ENCODE measurements at regions of chr2 and their contacts with region 1.

Region 1: GRCh38 chr2:60948926-60949579 is 67.7 kb downstream of the REL start:
- DNase-seq: peak; percentile 80
- H3K4me3 Mint-ChIP-seq: no peak overlapping the region
- H3K27ac Mint-ChIP-seq: peak overlapping the region; percentile 89
- H3K4me1 Mint-ChIP-seq: peaks cover 35% of the 10 kb centered on the region
- H3K27me3 Mint-ChIP-seq: no peaks in the 10 kb centered on the region
- CTCF ChIP-seq: no peak

Region 2: GRCh38 chr2:60614319-60614718 is 334.7 kb before region 1 on chr2:
- CTCF ChIA-PET with region 1: no interaction called
- POLR2A ChIA-PET with region 1: no interaction called
- intact Hi-C with region 1: no loop called
- DNase-seq: no peak
- H3K4me3 Mint-ChIP-seq: no peak overlapping the region
- H3K27ac Mint-ChIP-seq: no peak overlapping the region
- H3K4me1 Mint-ChIP-seq: no peaks in the 10 kb centered on the region
- H3K27me3 Mint-ChIP-seq: no peaks in the 10 kb centered on the region
- CTCF ChIP-seq: no peak

Region 3: DNA sequence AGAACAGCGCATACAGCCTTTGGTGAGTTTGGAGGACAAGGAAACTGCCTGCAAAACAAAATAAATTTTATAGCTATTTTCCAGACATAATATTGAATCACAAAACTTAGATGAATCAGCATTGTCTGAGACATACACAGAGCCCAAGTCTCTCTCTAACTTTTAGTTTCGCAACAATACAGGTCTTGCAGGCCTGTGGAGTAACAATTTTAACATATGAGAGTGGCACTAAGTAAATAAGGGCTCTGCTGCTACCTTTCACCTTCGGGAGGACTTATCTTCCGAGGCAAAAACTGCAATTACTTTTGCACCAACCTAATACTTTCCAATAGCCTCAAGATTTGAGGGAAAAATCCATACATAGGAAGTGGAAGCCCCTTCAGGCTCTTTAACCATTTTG is 12.4 kb after region 1 on chr2:
- CTCF ChIA-PET with region 1: interaction called, 3 read pairs
- POLR2A ChIA-PET with region 1: interaction called, 118 read pairs
- intact Hi-C with region 1: no loop called
- DNase-seq: peak; percentile 84
- H3K4me3 Mint-ChIP-seq: no peak overlapping the region
- H3K27ac Mint-ChIP-seq: peak overlapping the region; percentile 71
- H3K4me1 Mint-ChIP-seq: peaks cover 21% of the 10 kb centered on the region
- H3K27me3 Mint-ChIP-seq: no peaks in the 10 kb centered on the region
- CTCF ChIP-seq: no peak

Region 4: DNA sequence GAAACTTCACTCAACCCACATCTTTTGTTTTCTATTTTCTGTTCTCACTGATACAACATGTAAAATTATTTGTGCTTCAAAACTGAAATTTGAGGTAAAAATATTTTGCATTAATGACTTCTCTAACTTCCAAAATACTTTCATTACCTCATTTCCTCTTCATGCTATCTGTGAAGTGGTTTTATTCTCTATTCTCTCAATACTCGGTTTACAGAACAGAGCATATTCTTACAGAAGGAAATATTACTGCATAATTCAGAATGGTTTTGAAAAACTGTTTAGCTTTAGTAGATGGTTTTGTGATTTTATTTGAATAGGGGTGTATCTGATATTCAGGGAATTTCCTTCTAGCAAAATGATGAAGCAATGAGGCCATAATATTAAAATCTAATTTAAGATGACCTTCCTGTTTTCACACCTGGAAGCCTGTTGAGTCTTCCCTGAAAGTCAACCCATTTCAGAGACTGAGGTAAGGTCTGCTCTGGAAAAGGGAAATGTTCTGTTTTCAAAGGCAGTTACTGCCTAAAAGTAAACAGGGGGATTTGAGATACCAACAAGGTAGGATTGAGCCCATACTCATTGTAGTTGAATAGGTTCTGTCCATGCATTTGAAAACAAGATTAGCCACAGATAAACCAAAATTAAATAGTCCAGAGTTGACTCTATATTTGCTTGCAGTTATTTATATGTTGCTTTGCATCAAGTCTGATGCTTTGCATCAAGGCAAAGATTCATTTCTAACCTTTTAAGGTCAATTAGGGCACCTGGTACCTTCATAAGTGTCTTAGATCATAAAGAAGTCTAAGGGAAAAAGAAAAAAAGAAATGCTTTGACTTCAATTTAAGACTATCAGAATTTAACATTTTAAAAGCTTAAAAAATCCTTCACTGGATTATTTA is 17.7 kb after region 1 on chr2:
- CTCF ChIA-PET with region 1: interaction called, 3 read pairs
- POLR2A ChIA-PET with region 1: interaction called, 118 read pairs
- intact Hi-C with region 1: no loop called
- DNase-seq: no peak
- H3K4me3 Mint-ChIP-seq: no peak overlapping the region
- H3K27ac Mint-ChIP-seq: no peak overlapping the region
- H3K4me1 Mint-ChIP-seq: no peaks in the 10 kb centered on the region
- H3K27me3 Mint-ChIP-seq: no peaks in the 10 kb centered on the region
- CTCF ChIP-seq: no peak